ENCODE measurements at regions of chr17 and their contacts with region 1.

Region 1: GRCh38 chr17:56939901-56940343 is 20.9 kb downstream of the COIL start:
- DNase-seq: peak; percentile 45
- ATAC-seq: peak; percentile 83
- H3K4me3 ChIP-seq: no peak overlapping the region
- H3K27ac ChIP-seq: no peak overlapping the region
- H3K4me1 ChIP-seq: peaks cover 7% of the 10 kb centered on the region
- H3K27me3 ChIP-seq: no peaks in the 10 kb centered on the region
- CTCF ChIP-seq: peak; percentile 81

Region 2: GRCh38 chr17:56819431-56820145 is 120.3 kb before region 1 on chr17:
- CTCF ChIA-PET with region 1: interaction called, 3 read pairs
- POLR2A ChIA-PET with region 1: no interaction called
- in situ Hi-C with region 1: no loop called
- intact Hi-C with region 1: loop called (anchors 2 kb)
- DNase-seq: peak; percentile 61
- ATAC-seq: peak; percentile 98
- H3K4me3 ChIP-seq: 0 out of 4 replicates have a peak overlapping the region, but pooled peaks of 1 of the 2 experiments have one; percentile 3
- H3K27ac ChIP-seq: 0 out of 2 replicates have a peak overlapping the region, but pooled peaks have one; percentile 23
- H3K4me1 ChIP-seq: 0 out of 2 replicates have a peak, but pooled peaks cover 3% of the 10 kb centered on the region
- H3K27me3 ChIP-seq: no peaks in the 10 kb centered on the region
- CTCF ChIP-seq: peak; percentile 92

Region 3: DNA sequence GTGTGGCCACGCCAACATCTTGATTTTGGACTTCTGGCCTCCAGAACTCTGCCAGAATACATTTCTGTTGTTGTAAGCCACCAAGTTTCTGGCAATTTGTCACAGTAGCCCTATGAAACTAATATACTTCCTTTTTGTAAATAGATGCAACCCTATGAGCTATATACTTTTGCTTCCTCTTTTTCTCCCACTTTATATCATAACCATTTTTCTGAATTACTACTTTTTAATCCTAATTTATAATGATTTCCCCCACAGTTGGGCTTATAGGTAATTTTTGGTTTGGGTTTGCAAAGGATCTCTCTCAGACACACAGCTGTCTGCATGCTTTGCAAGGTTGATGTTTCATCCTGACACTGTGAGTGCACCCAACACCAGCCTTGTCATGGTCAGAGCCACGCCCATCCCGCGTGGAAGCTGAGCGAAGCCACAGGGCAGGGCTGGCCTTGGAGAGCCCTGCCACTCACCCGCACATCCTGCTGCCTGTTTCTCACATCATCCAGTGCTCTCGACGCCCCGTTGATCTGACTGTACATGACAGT is 31.9 kb before region 1 on chr17:
- CTCF ChIA-PET with region 1: no interaction called
- POLR2A ChIA-PET with region 1: no interaction called
- in situ Hi-C with region 1: no loop called
- intact Hi-C with region 1: loop called (anchors 5 kb)
- DNase-seq: no peak
- ATAC-seq: no peak
- H3K4me3 ChIP-seq: no peak overlapping the region
- H3K27ac ChIP-seq: no peak overlapping the region
- H3K4me1 ChIP-seq: peaks cover 10% of the 10 kb centered on the region
- H3K27me3 ChIP-seq: no peaks in the 10 kb centered on the region
- CTCF ChIP-seq: no peak

Region 4: GRCh38 chr17:57084802-57085447 is 145.0 kb after region 1 on chr17 and contains the start of gene AKAP1:
- CTCF ChIA-PET with region 1: no interaction called
- POLR2A ChIA-PET with region 1: no interaction called
- in situ Hi-C with region 1: no loop called
- intact Hi-C with region 1: no loop called
- DNase-seq: peak; percentile 64
- ATAC-seq: peak; percentile 97
- H3K4me3 ChIP-seq: peak within 1 kb of the TSS; percentile 82 to 91
- H3K27ac ChIP-seq: peak within 1 kb of the TSS; percentile 97
- H3K4me1 ChIP-seq: peaks cover 26% of the 10 kb centered on the region
- H3K27me3 ChIP-seq: no peaks in the 10 kb centered on the region
- CTCF ChIP-seq: peak; percentile 63; the same call in 1 of the 2 replicates
- total RNA-seq, gene AKAP1: 52.7 TPM

Measured in Panc1 (cell line).